ENCODE measurements at regions of chr17 and their contacts with region 1.

Region 1: GRCh38 chr17:76868176-76868668 is at the start of gene MGAT5B:
- DNase-seq: no peak
- H3K4me3 ChIP-seq: peak within 1 kb of the TSS; percentile 35 to 57
- H3K27ac ChIP-seq: no peak within 1 kb of the TSS
- H3K4me1 ChIP-seq: peaks cover 17% of the 10 kb centered on the region
- H3K27me3 ChIP-seq: peaks cover 9% of the 10 kb centered on the region
- CTCF ChIP-seq: peak; percentile 63 to 87 (median 82)
- POLR2A ChIP-seq: no peak
- total RNA-seq, gene MGAT5B: 0.49 TPM

Region 2: DNA sequence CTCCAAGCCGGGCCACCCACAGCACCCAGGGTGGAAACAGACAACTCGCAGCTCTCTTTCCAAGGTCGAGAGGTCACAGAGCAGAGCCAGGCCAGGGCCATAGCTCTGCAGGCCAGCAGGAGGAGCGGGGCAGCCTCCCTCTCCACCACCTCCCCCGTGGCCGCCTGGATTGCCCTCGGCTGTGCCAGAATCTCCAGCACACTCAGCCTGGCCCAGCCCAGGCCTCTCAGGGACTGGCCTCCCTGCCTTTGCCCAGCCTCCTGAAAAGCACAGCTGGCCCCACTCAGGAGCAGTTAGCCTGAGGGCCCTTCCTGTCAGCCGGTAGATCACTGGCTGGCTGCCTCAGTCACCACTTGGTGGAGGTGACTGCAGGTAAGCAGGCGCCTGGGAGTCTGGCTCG is 186.7 kb after region 1 on chr17:
- intact Hi-C with region 1: loop called (anchors 5 kb)
- DNase-seq: no peak
- H3K4me3 ChIP-seq: no peak overlapping the region
- H3K27ac ChIP-seq: no peak overlapping the region
- H3K4me1 ChIP-seq: no peaks in the 10 kb centered on the region
- H3K27me3 ChIP-seq: no peaks in the 10 kb centered on the region
- CTCF ChIP-seq: no peak
- POLR2A ChIP-seq: no peak

Region 3: DNA sequence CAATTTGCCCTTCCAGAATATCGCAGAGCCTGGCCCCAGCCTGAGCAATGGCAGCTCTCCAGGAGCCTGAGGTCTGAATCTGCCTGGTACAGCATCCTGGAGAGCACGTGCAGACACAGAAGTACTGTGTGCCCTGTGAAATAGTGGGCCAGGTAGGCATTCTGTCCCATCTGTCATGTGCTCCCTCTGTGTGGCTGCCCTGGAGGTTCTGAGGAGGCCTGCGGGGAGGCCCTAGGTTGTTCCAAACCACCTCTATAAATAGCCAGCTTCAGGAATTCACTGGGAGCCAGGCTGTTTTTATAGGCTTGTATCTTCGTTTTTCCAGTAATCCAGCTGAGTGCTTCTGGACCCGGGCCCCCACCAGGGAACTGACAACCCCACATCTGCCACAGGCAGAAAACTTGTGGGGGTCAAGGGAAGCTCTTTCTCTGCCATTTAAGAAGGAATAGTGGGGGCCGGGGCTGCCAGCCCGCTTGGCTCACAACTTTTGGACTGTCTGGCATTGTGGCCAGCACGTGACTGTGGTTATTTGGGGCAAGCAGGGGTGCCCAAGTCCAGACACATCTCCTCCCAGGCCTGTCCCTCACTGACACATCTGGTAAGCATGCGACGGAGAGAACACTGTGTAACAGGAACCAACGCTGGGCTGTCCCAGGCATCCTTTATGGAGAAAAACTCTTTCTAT is 734.0 kb after region 1 on chr17:
- intact Hi-C with region 1: no loop called
- DNase-seq: peak in 1 of 2 donors; percentile 94
- H3K4me3 ChIP-seq: peak overlapping the region in 1 of 2 donors; percentile 7
- H3K27ac ChIP-seq: peak overlapping the region; percentile 92
- H3K4me1 ChIP-seq: peaks cover 33% of the 10 kb centered on the region
- H3K27me3 ChIP-seq: no peaks in the 10 kb centered on the region
- CTCF ChIP-seq: no peak
- POLR2A ChIP-seq: no peak

Measured in vagina (tissue), 2 donors.